ENCODE measurements at regions of chr1 and their contacts with region 1.

Region 1: GRCh38 chr1:9503001-9503675 is 36.1 kb upstream of the SLC25A33 start:
- DNase-seq: peak in 1 of 2 donors; percentile 29
- ATAC-seq: peak; percentile 47 to 98 (median 78)
- H3K4me3 ChIP-seq: no peak overlapping the region
- H3K27ac ChIP-seq: peak overlapping the region in 3 of 10 donors; percentile 26 to 39 (median 27)
- H3K4me1 ChIP-seq: peaks cover 0 to 6% (median 0%) of the 10 kb centered on the region in 9 donors
- H3K27me3 ChIP-seq: no peaks in the 10 kb centered on the region
- CTCF ChIP-seq: no peak

Region 2: GRCh38 chr1:9520411-9520810 is 17.3 kb after region 1 on chr1:
- intact Hi-C with region 1: loop called in 1 of 10 experiments (anchors 1 kb)
- DNase-seq: no peak
- ATAC-seq: no peak
- H3K4me3 ChIP-seq: no peak overlapping the region
- H3K27ac ChIP-seq: no peak overlapping the region
- H3K4me1 ChIP-seq: no peaks in the 10 kb centered on the region
- H3K27me3 ChIP-seq: peaks cover 0 to 5% (median 0%) of the 10 kb centered on the region in 7 donors
- CTCF ChIP-seq: no peak

Measured in heart right ventricle (tissue), 16 donors.